ENCODE measurements at regions of chr11 and their contacts with region 1.

Region 1: GRCh38 chr11:128290106-128290840 is 297.1 kb downstream of the ETS1 start:
- DNase-seq: peak; percentile 72
- H3K4me3 Mint-ChIP-seq: no peak overlapping the region
- H3K27ac Mint-ChIP-seq: no peak overlapping the region
- H3K4me1 Mint-ChIP-seq: peaks cover 15% of the 10 kb centered on the region
- H3K27me3 Mint-ChIP-seq: no peaks in the 10 kb centered on the region
- CTCF ChIP-seq: peak; percentile 76

Region 2: GRCh38 chr11:128021349-128022006 is 268.8 kb before region 1 on chr11:
- CTCF ChIA-PET with region 1: no interaction called
- POLR2A ChIA-PET with region 1: no interaction called
- intact Hi-C with region 1: loop called (anchors 10 kb)
- DNase-seq: peak; percentile 28
- H3K4me3 Mint-ChIP-seq: no peak overlapping the region
- H3K27ac Mint-ChIP-seq: no peak overlapping the region
- H3K4me1 Mint-ChIP-seq: peaks cover 8% of the 10 kb centered on the region
- H3K27me3 Mint-ChIP-seq: no peaks in the 10 kb centered on the region
- CTCF ChIP-seq: peak; percentile 39

Region 3: DNA sequence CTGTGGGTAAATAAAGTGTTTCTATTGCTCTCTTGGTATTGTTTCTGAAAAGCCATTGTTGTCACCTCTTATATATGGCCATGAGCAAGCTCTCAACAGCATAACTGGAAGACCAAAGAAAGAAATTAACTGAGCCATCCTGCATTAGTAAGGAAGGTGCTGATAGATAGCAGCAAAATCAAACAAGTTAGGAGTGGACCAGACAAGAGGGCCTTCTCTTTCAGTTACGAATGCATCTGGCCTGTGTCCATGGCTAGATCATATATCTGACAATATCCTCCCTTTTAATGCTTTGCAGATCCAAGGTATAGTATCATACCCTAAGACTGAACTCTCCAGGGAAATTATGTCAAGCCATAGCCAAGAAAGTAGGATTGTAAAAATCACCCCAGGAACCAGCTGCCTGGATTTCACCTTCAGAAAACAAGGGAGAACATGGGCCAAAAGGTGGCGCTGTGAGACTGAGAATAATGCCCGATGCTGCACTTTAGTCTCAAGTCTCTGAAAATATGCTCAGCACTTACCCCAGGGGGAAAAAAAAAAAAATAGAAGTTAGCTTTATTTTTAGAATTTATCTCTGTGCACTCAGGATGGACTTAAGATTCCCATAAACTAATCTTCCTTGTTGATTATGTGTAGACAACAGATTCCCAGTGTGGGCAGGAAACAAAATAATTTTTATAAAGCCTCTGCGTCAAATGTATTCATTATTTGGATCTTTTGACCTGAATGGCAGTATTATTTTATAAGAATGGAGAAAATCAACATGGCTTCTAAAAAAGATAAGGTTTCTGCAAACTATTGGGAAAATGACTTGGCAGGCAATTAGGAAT is 118.0 kb before region 1 on chr11:
- CTCF ChIA-PET with region 1: interaction called, 6 read pairs
- POLR2A ChIA-PET with region 1: no interaction called
- intact Hi-C with region 1: loop called (anchors 1 kb)
- DNase-seq: peak; percentile 87
- H3K4me3 Mint-ChIP-seq: no peak overlapping the region
- H3K27ac Mint-ChIP-seq: peak overlapping the region; percentile 88
- H3K4me1 Mint-ChIP-seq: peaks cover 23% of the 10 kb centered on the region
- H3K27me3 Mint-ChIP-seq: no peaks in the 10 kb centered on the region
- CTCF ChIP-seq: peak; percentile 78

Region 4: DNA sequence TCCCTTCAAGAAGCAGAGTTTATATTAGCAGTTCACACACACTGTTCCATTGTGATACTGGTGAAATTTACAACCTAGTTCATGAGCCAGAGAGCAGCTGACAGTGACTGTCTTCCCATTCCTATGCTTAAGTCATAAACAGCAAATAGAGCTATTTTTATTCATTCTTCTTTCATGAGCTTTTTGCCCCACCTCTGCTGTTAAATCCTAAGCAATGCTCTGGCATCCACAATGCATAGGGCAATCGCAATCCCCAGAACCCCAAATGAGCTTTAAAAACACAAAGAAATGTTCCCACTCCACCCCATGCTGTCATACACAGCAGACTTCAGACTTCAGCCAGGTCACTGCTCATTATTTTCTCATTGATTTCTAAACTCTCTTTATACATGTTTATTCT is 10.4 kb before region 1 on chr11:
- CTCF ChIA-PET with region 1: interaction called, 13 read pairs
- POLR2A ChIA-PET with region 1: no interaction called
- intact Hi-C with region 1: no loop called
- DNase-seq: peak; percentile 30
- H3K4me3 Mint-ChIP-seq: no peak overlapping the region
- H3K27ac Mint-ChIP-seq: peak overlapping the region; percentile 27
- H3K4me1 Mint-ChIP-seq: peaks cover 10% of the 10 kb centered on the region
- H3K27me3 Mint-ChIP-seq: no peaks in the 10 kb centered on the region
- CTCF ChIP-seq: no peak

Region 5: DNA sequence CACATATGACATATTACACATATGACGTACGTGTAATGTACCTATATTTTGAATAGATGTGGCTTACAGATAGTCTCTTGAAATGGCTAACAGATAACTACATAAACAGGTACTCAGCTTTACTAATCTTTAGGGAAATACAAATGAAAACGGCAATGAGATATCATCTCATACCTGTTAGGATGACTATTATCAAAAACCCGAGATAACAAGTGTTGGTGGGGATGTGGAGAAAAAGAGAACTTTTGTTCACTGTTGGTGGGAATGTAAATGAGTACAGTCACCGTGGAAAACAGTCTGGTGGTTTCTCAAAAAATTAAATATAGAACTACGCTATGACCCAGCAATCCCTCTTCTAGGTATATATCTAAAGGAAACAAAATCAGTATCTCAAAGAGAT is 49.5 kb after region 1 on chr11:
- CTCF ChIA-PET with region 1: no interaction called
- POLR2A ChIA-PET with region 1: no interaction called
- intact Hi-C with region 1: no loop called
- DNase-seq: no peak
- H3K4me3 Mint-ChIP-seq: no peak overlapping the region
- H3K27ac Mint-ChIP-seq: no peak overlapping the region
- H3K4me1 Mint-ChIP-seq: no peaks in the 10 kb centered on the region
- H3K27me3 Mint-ChIP-seq: no peaks in the 10 kb centered on the region
- CTCF ChIP-seq: no peak

Region 6: DNA sequence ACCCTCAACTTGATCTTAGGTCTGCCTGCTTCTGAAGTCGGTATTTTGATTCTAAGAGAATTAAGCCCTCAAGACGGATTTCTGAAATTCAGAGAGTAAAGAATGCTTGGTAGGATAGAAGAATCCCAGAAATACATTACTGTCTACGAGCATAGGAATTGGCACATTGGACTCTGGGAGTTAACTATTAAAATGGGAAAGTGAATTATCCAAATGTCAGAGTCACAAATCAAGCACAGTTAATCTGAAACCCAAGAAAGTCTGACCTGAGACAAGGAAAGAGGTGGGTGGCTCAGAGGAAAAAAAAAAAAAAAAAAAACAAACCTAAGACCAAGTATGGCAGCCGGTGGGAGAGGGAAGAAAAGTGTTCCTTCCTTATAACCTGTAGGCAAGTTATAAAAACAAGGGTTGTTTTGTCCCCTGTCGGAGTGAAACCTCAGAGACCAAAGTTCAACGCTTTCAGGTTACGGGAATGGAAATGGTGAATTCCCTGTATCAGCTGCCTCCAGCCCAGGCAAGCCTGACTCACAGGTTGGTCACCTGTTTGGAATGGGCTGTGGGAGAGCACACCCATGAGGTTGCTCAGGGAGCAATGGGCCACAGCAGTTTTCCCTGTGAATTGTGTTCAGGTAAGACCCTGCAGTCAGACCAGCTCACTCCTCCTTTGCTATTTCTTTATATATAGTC is 158.1 kb after region 1 on chr11:
- CTCF ChIA-PET with region 1: interaction called, 27 read pairs
- POLR2A ChIA-PET with region 1: interaction called, 3 read pairs
- intact Hi-C with region 1: loop called (anchors 1 kb)
- DNase-seq: peak; percentile 87
- H3K4me3 Mint-ChIP-seq: peak overlapping the region; percentile 61
- H3K27ac Mint-ChIP-seq: peak overlapping the region; percentile 88
- H3K4me1 Mint-ChIP-seq: peaks cover 22% of the 10 kb centered on the region
- H3K27me3 Mint-ChIP-seq: no peaks in the 10 kb centered on the region
- CTCF ChIP-seq: peak; percentile 10

Region 7: GRCh38 chr11:128686745-128687177 is 396.5 kb after region 1 on chr11:
- CTCF ChIA-PET with region 1: no interaction called
- POLR2A ChIA-PET with region 1: no interaction called
- intact Hi-C with region 1: no loop called
- DNase-seq: no peak
- H3K4me3 Mint-ChIP-seq: no peak overlapping the region
- H3K27ac Mint-ChIP-seq: no peak overlapping the region
- H3K4me1 Mint-ChIP-seq: no peaks in the 10 kb centered on the region
- H3K27me3 Mint-ChIP-seq: peaks cover 52% of the 10 kb centered on the region
- CTCF ChIP-seq: no peak

Measured in MCF 10A (cell line).